ENCODE measurements at regions of chr9 and their contacts with region 1.

Region 1: GRCh38 chr9:113427629-113428028 is 17.1 kb downstream of the C9orf43 start:
- DNase-seq: no peak

Region 2: GRCh38 chr9:113669522-113670115 is 242.0 kb after region 1 on chr9:
- intact Hi-C with region 1: loop called in 1 of 2 experiments (anchors 10 kb)
- DNase-seq: no peak

Measured in posterior vena cava (tissue), 2 donors.